Activated naive CD8-positive, alpha-beta T cell treated with anti-CD3 and anti-CD28 coated beads, Interleukin-2, amount 10 ng/mL, durations not matched to agents 7 days and 5 days (primary cell): ENCODE measurements at regions of chr19 and their contacts with region 1.

Region 1: DNA sequence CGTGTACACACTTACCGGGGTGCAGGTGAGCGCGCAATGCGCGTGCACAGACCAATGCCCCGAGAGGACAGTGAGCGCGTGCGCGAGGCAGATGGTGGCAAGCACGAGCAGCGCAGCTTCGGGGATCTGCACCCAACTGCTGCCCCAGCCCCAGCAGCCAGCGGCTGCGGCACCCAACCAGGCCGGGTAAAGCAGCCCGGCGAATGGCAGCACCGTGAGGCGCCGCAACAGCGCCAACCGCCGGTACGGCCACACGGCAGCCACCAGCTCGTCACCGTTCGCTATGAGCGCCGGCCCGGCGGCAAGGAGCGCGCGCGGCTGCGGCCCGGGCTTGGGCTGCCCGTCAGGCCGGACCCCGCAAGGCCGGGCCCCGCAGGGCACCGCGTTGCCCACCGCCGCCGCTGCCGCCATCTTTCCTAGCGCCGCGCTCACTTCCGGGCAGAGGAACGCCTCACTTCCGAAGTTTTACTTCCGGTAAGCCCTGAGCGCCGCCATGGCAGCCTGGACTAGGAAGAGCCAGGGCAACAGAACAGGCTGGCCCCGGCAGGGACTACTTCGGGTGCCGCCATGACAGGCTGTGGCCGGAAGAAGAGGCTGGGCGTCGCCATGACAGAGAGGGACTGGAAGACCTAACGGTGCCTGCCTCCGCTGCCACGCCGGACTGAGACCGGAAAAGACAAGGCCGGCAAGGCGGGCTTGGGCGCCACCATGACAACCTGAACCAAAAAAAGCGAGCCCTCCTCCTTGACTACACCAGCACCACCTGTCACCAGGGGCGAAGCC is at the start of gene ATP13A1:
- DNase-seq: peak; percentile 92
- ATAC-seq: peak; percentile 79
- H3K4me3 Mint-ChIP-seq: peak within 1 kb of the TSS; percentile 93
- H3K27ac Mint-ChIP-seq: peak within 1 kb of the TSS; percentile 98
- H3K4me1 Mint-ChIP-seq: peaks cover 26% of the 10 kb centered on the region
- H3K27me3 Mint-ChIP-seq: no peaks in the 10 kb centered on the region
- total RNA-seq, gene ATP13A1: 108 to 115 TPM

Region 2: GRCh38 chr19:19652456-19653295 is 10.8 kb before region 1 on chr19:
- POLR2A ChIA-PET with region 1: interaction called, 11 read pairs
- DNase-seq: no peak
- ATAC-seq: no peak
- H3K4me3 Mint-ChIP-seq: no peak overlapping the region
- H3K27ac Mint-ChIP-seq: no peak overlapping the region
- H3K4me1 Mint-ChIP-seq: no peaks in the 10 kb centered on the region
- H3K27me3 Mint-ChIP-seq: no peaks in the 10 kb centered on the region

Region 3: GRCh38 chr19:19686580-19686979 is 23.1 kb after region 1 on chr19:
- POLR2A ChIA-PET with region 1: interaction called, 15 read pairs
- DNase-seq: no peak
- ATAC-seq: no peak
- H3K4me3 Mint-ChIP-seq: no peak overlapping the region
- H3K27ac Mint-ChIP-seq: no peak overlapping the region
- H3K4me1 Mint-ChIP-seq: no peaks in the 10 kb centered on the region
- H3K27me3 Mint-ChIP-seq: no peaks in the 10 kb centered on the region

Region 4: GRCh38 chr19:19732579-19733501 is 69.4 kb after region 1 on chr19 and contains the start of gene ZNF14:
- POLR2A ChIA-PET with region 1: interaction called, 25 read pairs
- DNase-seq: peak; percentile 85
- ATAC-seq: peak; percentile 100
- H3K4me3 Mint-ChIP-seq: peak within 1 kb of the TSS; percentile 99
- H3K27ac Mint-ChIP-seq: peak within 1 kb of the TSS; percentile 97
- H3K4me1 Mint-ChIP-seq: peaks cover 16% of the 10 kb centered on the region
- H3K27me3 Mint-ChIP-seq: no peaks in the 10 kb centered on the region
- total RNA-seq, gene ZNF14: 13.7 to 16.9 TPM

Region 5: GRCh38 chr19:19776041-19777008 is 112.9 kb after region 1 on chr19:
- POLR2A ChIA-PET with region 1: interaction called, 22 read pairs
- DNase-seq: peak; percentile 90
- ATAC-seq: peak; percentile 99
- H3K4me3 Mint-ChIP-seq: peak overlapping the region; percentile 93
- H3K27ac Mint-ChIP-seq: peak overlapping the region; percentile 89
- H3K4me1 Mint-ChIP-seq: peaks cover 26% of the 10 kb centered on the region
- H3K27me3 Mint-ChIP-seq: no peaks in the 10 kb centered on the region

Region 6: DNA sequence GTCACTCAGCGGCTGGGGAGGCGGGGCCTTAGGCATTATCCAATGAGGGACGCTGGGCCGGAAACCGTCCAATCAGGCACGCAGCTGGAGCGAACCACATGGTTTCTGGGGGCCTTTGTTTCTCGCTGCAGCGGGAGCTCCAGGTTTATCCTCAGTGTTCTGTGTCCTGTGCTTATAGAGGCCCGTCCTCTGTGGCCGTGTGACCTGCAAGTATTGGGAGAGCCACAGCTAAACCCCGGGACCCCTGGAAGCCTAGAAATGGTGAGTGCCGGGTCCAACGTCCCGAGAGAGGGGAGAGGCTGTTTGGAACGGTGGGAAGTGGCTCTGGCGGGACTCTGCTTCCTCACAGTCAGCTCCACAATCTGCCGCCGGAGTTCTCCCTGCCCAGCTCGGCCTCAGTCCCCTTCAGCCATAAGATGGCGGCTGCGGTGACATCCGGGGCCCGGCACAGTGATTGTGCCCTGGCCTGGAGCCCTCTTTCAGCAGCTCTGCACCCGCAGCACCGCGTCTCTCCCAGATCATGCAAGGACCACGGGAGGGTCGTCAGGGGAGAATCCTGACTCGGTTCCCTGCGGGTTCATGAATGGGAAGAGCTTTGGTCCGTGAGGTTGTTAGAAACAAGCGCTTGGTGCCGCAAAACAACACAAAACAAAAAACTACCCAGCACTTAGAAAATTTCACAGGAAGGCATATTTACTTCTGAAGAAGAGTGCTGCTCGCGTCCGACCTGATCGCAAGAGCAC is 202.5 kb after region 1 on chr19 and contains the start of gene ZNF253:
- POLR2A ChIA-PET with region 1: interaction called, 50 read pairs
- DNase-seq: peak; percentile 91
- ATAC-seq: peak; percentile 93
- H3K4me3 Mint-ChIP-seq: peak within 1 kb of the TSS; percentile 97
- H3K27ac Mint-ChIP-seq: peak within 1 kb of the TSS; percentile 98
- H3K4me1 Mint-ChIP-seq: peaks cover 13% of the 10 kb centered on the region
- H3K27me3 Mint-ChIP-seq: no peaks in the 10 kb centered on the region
- total RNA-seq, gene ZNF253: 25.6 to 32.4 TPM

Region 7: GRCh38 chr19:19900729-19901444 is 237.4 kb after region 1 on chr19 and contains the start of gene ZNF93:
- POLR2A ChIA-PET with region 1: interaction called, 22 read pairs
- DNase-seq: peak; percentile 83
- ATAC-seq: peak; percentile 96
- H3K4me3 Mint-ChIP-seq: peak within 1 kb of the TSS; percentile 93
- H3K27ac Mint-ChIP-seq: peak within 1 kb of the TSS; percentile 93
- H3K4me1 Mint-ChIP-seq: peaks cover 25% of the 10 kb centered on the region
- H3K27me3 Mint-ChIP-seq: no peaks in the 10 kb centered on the region
- total RNA-seq, gene ZNF93: 20.3 to 22.2 TPM